ENCODE measurements at regions of chr4 and their contacts with region 1.

Region 1: DNA sequence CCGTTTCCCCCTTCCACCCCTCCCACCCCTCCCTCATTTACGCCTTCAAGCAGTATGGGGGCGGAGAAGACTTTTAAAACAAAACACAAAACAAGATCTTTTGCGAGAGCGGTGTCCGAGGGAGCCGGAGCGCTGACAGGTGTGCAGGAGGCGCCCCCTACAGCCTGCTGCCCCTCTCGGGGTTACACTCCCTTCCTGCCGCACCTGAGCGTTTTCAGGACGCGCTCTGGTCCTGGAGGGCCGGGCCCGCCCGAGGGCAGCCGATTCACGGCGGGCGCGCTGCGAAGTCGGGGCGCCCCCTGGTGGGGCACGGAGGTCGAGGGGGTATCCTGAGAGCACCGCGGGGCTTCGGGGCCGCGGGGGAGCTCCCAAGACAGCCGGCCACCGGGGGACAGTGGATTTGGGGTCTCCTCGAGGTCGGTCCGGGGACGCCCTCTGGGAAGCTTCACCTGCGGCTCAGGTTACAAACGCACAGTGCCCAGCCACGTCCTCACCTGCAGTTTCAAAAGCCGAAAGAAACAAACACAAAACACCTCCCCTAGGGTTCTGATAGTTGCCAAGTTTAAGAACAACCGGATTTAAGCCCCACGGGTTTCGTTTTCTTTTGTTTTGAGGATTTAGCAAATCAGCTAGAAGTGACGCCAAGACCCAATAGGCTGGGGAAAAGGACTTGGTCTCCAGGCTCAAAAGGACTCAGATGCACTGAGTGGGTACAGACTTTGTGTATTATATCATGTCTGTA is 8.0 kb upstream of the NEUROG2 start:
- DNase-seq: peak; percentile 86
- H3K4me3 Mint-ChIP-seq: peak overlapping the region; percentile 72
- H3K27ac Mint-ChIP-seq: no peak overlapping the region
- H3K4me1 Mint-ChIP-seq: peaks cover 31% of the 10 kb centered on the region
- H3K27me3 Mint-ChIP-seq: peaks cover 51% of the 10 kb centered on the region

Region 2: DNA sequence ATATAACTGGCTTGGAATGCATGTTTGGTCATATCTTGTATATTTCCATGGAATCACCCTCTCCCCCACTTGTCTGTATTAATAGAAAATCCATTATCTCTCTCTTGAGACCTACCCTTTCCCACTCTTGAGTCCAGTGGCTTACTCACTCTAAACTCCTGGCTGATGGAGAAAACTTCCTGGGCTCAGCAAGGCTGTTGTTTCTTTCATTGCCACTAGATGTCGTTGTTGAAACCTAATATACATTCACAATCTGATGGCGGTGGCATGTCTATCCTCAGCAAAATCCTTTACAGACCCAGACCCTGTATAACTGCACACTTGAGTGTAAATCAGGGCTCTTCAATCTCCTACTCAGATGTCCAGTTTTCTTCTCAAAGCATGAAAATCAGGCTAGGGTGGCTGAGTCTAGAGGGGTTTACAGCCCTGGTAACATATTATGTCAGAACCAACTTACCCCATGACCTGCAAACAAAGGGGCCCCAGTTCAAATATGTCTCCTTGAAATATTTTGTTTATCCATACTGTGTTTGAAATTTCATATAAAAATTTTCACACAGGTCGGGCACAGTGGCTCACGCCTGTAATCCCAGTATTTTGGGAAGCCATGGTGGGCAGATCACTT is 448.7 kb before region 1 on chr4:
- CTCF ChIA-PET with region 1: interaction called, 5 read pairs
- POLR2A ChIA-PET with region 1: no interaction called
- intact Hi-C with region 1: loop called (anchors 5 kb)
- DNase-seq: peak; percentile 30
- H3K4me3 Mint-ChIP-seq: no peak overlapping the region
- H3K27ac Mint-ChIP-seq: no peak overlapping the region
- H3K4me1 Mint-ChIP-seq: no peaks in the 10 kb centered on the region
- H3K27me3 Mint-ChIP-seq: peaks cover 11% of the 10 kb centered on the region

Region 3: GRCh38 chr4:112145326-112145819 is 378.6 kb before region 1 on chr4 and contains the start of gene FAM241A:
- CTCF ChIA-PET with region 1: no interaction called
- POLR2A ChIA-PET with region 1: no interaction called
- intact Hi-C with region 1: loop called (anchors 1 kb)
- DNase-seq: peak; percentile 92
- H3K4me3 Mint-ChIP-seq: peak within 1 kb of the TSS; percentile 87
- H3K27ac Mint-ChIP-seq: peak within 1 kb of the TSS; percentile 84
- H3K4me1 Mint-ChIP-seq: peaks cover 42% of the 10 kb centered on the region
- H3K27me3 Mint-ChIP-seq: no peaks in the 10 kb centered on the region
- total RNA-seq, gene FAM241A: 3.1 to 3.5 TPM

Region 4: DNA sequence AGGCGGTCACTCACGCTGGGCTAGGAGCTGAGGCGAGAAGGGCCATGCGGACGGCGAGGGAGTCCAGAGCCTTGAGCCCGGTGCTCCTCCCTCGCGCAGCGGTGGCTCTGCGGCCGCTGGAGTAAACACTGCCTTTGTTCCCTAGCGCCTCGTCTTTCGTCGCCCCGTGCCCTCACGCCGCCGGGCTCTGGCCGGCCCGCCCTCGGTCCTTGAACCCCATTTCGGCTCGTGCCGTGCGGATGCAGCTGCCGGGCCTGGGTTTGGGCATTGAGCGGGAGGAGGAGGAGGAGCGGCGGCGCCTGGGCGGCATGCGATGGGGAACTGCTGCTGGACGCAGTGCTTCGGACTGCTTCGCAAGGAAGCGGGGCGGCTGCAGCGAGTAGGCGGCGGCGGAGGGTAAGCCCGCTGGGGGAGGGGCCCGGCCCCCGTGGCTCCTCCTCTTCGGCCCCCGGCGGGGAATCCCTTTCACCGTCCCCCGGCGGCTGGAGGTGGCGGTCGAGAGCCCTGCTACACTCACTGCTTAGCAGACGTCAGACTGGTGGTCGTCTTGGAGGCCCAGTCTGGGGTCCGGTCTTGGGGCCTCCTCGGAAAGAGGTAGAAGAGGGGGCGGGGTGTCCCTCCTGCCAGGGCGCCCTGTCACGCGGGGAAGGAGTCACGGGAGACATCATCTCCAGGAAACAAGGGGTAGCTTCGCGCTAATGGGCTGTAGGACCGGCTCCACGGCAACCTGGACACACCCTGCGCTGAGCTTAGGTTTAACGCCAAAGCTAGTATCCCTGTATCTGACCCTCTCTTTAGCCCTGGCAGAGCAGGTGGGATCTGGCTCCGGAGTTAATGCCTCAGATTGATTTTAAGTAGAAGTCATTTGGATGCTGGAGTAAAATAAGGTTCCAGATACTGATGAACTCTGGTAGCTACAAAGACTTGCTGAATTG is 291.9 kb before region 1 on chr4 and contains the start of gene AP1AR:
- CTCF ChIA-PET with region 1: interaction called, 6 read pairs
- POLR2A ChIA-PET with region 1: no interaction called
- intact Hi-C with region 1: loop called (anchors 1 kb)
- DNase-seq: peak; percentile 87
- H3K4me3 Mint-ChIP-seq: peak within 1 kb of the TSS; percentile 87
- H3K27ac Mint-ChIP-seq: peak within 1 kb of the TSS; percentile 98
- H3K4me1 Mint-ChIP-seq: peaks cover 34% of the 10 kb centered on the region
- H3K27me3 Mint-ChIP-seq: no peaks in the 10 kb centered on the region
- total RNA-seq, gene AP1AR: 15.4 to 19.1 TPM

Region 5: DNA sequence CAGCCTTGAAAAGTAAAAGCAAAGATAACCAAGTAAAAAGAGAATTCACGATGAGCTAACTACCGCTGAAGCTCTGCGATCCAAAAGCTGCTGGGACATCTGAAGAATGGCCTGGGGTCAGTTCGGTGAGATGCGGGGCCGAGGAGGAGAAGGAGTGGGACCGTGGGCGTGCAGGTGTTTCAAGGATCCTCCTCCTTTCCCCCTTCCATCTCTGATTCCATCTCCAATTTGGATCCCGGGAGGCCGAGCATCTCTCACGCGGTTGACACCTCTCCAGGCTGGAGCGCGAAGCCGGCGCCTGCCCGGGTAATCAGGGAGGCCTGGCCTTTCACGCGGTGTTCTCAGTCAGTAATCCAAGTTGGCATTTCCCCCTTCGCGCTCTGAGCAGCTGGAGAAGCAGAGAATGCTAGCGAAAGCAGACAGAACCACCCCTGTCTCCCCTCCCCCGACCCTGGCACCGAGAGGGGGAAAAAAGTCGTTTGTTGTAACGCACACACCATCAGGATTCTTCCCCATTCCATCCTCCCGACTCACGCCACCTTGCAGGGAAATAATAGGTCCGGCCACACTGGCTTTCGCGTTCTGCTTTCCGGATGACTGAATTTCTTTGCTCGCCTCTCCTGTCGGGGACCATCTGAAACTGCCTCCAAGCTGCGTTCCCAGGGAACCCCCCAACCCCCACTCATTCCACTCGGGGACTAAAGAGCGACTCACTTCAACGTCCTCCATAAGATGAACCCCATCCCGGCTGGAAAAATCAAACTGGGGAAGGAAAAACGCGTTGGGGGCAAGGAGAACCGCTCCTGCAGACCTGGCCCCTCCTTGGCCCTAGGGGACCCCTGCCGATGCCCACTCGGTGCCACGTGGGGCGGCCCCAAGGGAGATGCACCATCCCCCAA is 14.4 kb before region 1 on chr4:
- CTCF ChIA-PET with region 1: interaction called, 52 read pairs
- POLR2A ChIA-PET with region 1: interaction called, 5 read pairs
- intact Hi-C with region 1: no loop called
- DNase-seq: peak; percentile 19
- H3K4me3 Mint-ChIP-seq: peak overlapping the region; percentile 45
- H3K27ac Mint-ChIP-seq: no peak overlapping the region
- H3K4me1 Mint-ChIP-seq: peaks cover 30% of the 10 kb centered on the region
- H3K27me3 Mint-ChIP-seq: peaks cover 76% of the 10 kb centered on the region

Region 6: GRCh38 chr4:112604589-112604988 is 80.7 kb after region 1 on chr4:
- CTCF ChIA-PET with region 1: no interaction called
- POLR2A ChIA-PET with region 1: no interaction called
- intact Hi-C with region 1: no loop called
- DNase-seq: peak; percentile 18
- H3K4me3 Mint-ChIP-seq: no peak overlapping the region
- H3K27ac Mint-ChIP-seq: no peak overlapping the region
- H3K4me1 Mint-ChIP-seq: no peaks in the 10 kb centered on the region
- H3K27me3 Mint-ChIP-seq: no peaks in the 10 kb centered on the region

Region 7: DNA sequence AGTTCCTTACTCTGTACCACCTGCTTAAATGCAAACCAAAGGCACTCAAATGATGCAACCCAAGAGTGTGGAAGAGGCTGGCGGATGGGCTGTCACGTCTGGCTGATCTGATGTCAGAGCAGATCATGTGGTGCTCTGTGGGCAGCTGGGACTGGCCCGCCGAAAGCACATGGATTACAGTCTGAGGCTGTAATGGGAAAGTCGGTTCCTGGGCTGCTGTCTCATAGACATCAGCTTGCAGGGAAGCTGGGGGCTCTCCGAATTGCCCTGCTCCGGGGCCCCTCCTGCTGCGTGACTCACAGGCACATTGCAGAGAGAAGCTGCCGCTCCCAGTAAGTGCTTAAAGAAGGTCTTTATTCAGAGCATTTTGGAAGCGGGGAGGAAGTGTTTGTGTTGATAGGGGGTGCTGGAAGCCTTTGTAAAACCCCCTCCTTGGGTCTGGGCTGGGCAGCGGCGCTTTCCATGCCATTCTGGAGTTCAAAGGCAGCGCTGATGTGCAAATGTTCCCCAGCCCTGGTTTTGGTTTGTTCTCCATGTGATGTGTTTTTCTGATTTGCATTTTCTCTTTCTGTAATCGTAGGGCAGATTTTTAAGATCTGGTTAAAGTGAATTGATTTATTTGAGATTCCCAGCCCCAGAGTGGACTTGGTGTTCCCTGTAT is 294.1 kb after region 1 on chr4:
- CTCF ChIA-PET with region 1: no interaction called
- POLR2A ChIA-PET with region 1: no interaction called
- intact Hi-C with region 1: loop called (anchors 5 kb)
- DNase-seq: peak; percentile 77
- H3K4me3 Mint-ChIP-seq: peak overlapping the region; percentile 75
- H3K27ac Mint-ChIP-seq: no peak overlapping the region
- H3K4me1 Mint-ChIP-seq: peaks cover 10% of the 10 kb centered on the region
- H3K27me3 Mint-ChIP-seq: peaks cover 29% of the 10 kb centered on the region

Measured in activated CD4-positive, alpha-beta memory T cell treated with anti-CD3 and anti-CD28 coated beads for 36 hours (primary cell).